ENCODE measurements at regions of chr14 and their contacts with region 1.

Region 1: DNA sequence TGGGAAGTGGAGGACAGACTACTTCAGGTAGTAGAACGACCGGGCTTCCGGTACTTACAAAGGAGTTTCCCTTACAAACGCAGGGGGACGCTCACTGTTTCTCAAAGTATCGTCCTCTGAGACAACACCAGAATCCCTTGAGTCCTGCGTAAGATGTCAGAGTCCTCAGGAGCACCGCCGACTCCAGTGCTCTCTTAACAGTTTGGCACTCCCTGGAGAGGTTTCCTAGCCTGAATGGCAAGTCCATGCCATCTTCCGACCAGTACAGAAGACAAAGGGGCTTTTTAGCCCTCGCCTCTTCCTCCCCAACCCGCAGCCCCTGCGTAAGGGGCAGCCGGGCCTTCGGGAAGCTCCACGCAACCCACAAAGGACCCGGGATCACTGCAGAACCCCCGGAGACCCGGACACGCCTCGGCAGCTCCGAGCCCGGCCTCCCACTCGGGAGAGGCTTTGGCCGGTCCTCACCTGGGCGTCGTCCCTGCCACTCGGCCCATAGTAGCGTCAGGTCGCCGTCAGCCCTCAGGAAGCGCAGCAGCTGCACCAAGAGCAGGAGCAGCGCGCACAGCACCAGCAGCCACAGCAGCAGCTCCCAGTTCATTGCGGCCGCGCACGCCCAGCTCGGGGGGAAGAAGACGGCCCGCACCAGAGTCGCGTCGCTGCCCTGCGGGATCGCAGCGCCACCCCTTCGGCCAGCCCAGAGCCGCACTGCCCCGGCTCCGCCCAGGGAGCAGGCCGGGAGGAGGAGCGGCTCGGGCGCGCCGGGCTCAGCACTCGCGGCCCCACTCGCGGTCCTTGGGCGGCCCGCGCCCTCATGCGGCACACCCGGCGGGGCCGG is at the start of gene DHRS7:
- DNase-seq: peak; percentile 61 to 74 (median 65)
- H3K4me3 ChIP-seq: peak within 1 kb of the TSS; percentile 74 to 76
- H3K4me3 Mint-ChIP-seq: peak within 1 kb of the TSS; percentile 96 to 99 (median 99)
- H3K27ac ChIP-seq: peak within 1 kb of the TSS; percentile 82
- H3K27ac Mint-ChIP-seq: peak within 1 kb of the TSS; percentile 97 to 99 (median 99)
- H3K4me1 ChIP-seq: peaks cover 53% of the 10 kb centered on the region
- H3K4me1 Mint-ChIP-seq: peaks cover 36 to 56% (median 47%) of the 10 kb centered on the region in 4 donors
- H3K27me3 ChIP-seq: no peaks in the 10 kb centered on the region
- H3K27me3 Mint-ChIP-seq: no peaks in the 10 kb centered on the region
- total RNA-seq, gene DHRS7: 63.5 to 69.6 TPM

Region 2: DNA sequence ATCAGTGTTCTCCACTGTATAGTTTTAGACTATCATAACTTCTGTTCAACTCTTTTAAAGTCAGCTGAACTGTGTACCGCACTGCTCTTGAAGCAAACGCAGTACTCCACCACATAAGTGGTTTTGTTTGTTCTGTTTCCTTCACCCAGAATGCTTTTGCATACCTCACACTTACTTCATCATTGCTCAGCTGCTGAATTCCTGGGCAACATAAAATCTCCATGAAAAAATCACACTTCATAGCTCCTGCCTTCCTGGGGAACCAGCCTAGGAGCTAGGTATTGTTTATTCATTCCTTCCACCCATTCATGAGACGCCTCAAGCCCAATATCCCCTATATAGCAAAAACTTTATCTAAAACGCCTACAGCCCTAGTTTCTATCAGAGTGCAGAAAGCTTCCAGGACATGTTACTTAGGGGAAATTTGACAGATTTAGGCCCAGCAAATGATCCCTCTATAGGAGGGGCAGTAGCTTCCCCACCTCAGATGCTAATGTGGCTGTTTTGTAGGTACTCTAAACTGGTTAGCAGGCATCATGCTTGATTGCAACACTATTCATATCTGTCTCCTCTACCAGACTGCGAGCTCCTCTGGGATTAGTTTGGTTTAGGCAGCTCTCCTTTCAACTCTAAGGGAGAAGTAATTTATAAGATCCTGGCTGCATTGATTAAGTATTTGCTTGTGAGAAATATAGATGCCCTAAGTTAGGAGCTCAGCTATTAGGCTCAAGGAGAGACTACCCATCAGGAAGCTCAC is 200.5 kb before region 1 on chr14:
- CTCF ChIA-PET with region 1: interaction called, 61 read pairs
- POLR2A ChIA-PET with region 1: interaction called, 3 read pairs
- intact Hi-C with region 1: loop called (anchors 1 kb)
- DNase-seq: peak in 1 of 5 donors; percentile 5
- H3K4me3 ChIP-seq: no peak overlapping the region
- H3K4me3 Mint-ChIP-seq: peak overlapping the region; percentile 77 to 98 (median 94)
- H3K27ac ChIP-seq: no peak overlapping the region
- H3K27ac Mint-ChIP-seq: peak overlapping the region in 5 of 7 donors; percentile 75 to 99 (median 99)
- H3K4me1 ChIP-seq: no peaks in the 10 kb centered on the region
- H3K4me1 Mint-ChIP-seq: peaks cover 0 to 13% (median 10%) of the 10 kb centered on the region in 4 donors
- H3K27me3 ChIP-seq: no peaks in the 10 kb centered on the region
- H3K27me3 Mint-ChIP-seq: peaks cover 2 to 3% of the 10 kb centered on the region in 2 donors

Region 3: DNA sequence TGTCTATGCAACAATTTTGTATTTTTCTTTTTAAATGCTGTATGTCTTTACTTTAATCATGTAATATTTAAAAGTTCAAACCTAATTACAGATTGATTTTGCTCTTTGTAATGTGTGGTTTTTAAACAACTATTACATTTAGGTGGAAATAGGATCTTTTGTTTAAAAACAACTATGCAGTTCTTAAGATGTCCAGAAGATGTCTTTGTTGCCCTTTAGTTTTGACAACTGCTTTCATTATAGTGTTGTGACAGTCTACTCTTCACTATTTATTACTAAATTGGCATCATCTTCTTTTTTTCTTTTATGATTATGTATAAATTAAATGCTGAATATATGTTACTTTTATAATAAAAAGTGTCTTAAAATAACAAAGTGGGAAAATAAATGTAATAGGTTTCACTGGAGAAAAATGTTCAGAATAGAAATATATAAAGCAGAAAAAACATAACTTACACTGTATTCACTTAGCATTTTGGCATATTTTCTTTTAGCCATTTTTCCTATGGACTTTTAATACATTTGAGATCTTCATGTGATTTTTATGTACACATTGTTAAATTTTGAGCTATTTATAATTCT is 100.3 kb before region 1 on chr14:
- CTCF ChIA-PET with region 1: interaction called, 41 read pairs
- POLR2A ChIA-PET with region 1: interaction called, 8 read pairs
- intact Hi-C with region 1: loop called (anchors 1 kb)
- DNase-seq: peak in 4 of 5 donors; percentile 27 to 44 (median 39)
- H3K4me3 ChIP-seq: no peak overlapping the region
- H3K4me3 Mint-ChIP-seq: no peak overlapping the region
- H3K27ac ChIP-seq: no peak overlapping the region
- H3K27ac Mint-ChIP-seq: no peak overlapping the region
- H3K4me1 ChIP-seq: no peaks in the 10 kb centered on the region
- H3K4me1 Mint-ChIP-seq: no peaks in the 10 kb centered on the region
- H3K27me3 ChIP-seq: no peaks in the 10 kb centered on the region
- H3K27me3 Mint-ChIP-seq: peaks cover 0 to 14% of the 10 kb centered on the region in 2 donors

Region 4: DNA sequence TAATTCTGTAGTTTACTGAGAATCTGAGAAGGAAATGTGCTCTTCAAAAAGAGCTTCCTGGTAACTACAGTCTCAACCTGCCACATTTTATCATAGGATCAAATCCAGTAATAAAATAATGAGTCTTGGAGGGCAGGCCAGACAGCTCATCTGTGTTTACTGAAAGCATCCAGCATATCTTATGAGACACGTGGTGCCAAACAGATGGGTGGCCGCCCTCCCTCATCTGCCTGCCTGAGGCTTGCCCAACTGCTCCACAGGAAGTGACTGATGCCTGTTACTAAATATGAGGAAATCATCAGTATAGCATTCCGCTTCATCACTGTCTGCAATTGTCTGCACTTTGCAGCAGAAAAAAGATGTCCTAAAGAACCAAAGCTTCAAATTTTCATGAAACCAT is 13.2 kb before region 1 on chr14:
- CTCF ChIA-PET with region 1: interaction called, 57 read pairs
- POLR2A ChIA-PET with region 1: interaction called, 121 read pairs
- intact Hi-C with region 1: loop called (anchors 1 kb)
- DNase-seq: peak; percentile 63 to 85 (median 68)
- H3K4me3 ChIP-seq: no peak overlapping the region
- H3K4me3 Mint-ChIP-seq: peak overlapping the region in 7 of 8 donors; percentile 17 to 69 (median 36)
- H3K27ac ChIP-seq: peak overlapping the region; percentile 50
- H3K27ac Mint-ChIP-seq: peak overlapping the region; percentile 90 to 95 (median 94)
- H3K4me1 ChIP-seq: peaks cover 49% of the 10 kb centered on the region
- H3K4me1 Mint-ChIP-seq: peaks cover 35 to 54% (median 44%) of the 10 kb centered on the region in 4 donors
- H3K27me3 ChIP-seq: no peaks in the 10 kb centered on the region
- H3K27me3 Mint-ChIP-seq: no peaks in the 10 kb centered on the region

Measured in CD4-positive, alpha-beta memory T cell (primary cell).